CD4-positive, alpha-beta T cell (primary cell): ENCODE measurements at regions of chr6 and their contacts with region 1.

Region 1: DNA sequence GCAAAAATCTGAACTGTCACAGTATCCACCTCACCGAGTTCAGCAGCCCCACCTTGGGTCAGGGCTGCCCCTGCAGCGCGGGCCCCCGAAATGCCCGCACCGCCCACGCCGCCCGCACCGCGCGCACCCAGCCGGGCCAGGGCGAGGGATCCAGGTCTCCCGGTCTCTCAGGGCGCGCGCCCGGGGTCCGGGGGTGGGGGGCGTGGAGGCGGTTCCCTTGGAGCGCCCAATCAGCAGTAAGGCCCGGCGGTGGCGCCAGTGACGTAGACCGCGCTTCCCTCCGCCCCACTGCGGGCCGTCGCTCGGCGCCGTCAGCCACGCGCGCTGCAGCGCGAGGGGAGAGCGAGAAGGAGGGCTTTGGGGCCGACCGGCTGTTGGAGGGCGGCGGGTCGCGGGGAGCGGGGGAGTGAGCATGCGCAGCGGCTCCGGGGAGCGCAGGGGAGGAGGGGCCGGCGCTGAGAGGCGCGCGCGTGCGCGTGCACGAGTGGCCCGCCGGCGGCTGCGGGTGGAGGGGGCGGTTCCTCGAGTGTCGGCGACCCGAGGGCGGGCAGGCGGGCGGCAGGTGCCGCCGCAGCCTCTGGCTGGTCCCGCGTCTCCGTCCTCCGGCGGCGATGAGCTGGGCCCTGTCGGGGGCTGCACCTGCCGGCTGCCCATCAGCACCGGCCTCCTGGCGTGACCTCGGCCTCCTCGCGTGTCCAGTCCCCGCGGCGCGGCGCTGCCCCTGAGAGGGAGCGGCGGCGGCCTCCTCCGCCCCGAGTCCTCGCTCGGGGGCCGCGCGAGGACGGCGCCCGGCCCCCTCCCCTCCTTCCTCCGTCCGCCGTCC is at the start of gene TMEM170B:
- DNase-seq: peak; percentile 94 to 99 (median 97)
- ATAC-seq: peak; percentile 92
- H3K4me3 ChIP-seq: peak within 1 kb of the TSS; percentile 73
- H3K4me3 Mint-ChIP-seq: peak within 1 kb of the TSS; percentile 93
- H3K27ac ChIP-seq: peak within 1 kb of the TSS in 1 of 2 donors; percentile 47
- H3K27ac Mint-ChIP-seq: peak within 1 kb of the TSS; percentile 84
- H3K4me1 ChIP-seq: peaks cover 14% of the 10 kb centered on the region
- H3K4me1 Mint-ChIP-seq: peaks cover 28% of the 10 kb centered on the region
- H3K27me3 ChIP-seq: no peaks in the 10 kb centered on the region
- H3K27me3 Mint-ChIP-seq: peaks cover 6% of the 10 kb centered on the region
- CTCF ChIP-seq: no peak
- total RNA-seq, gene TMEM170B: 1.9 to 2.1 TPM

Region 2: GRCh38 chr6:10837995-10838793 is 699.2 kb before region 1 on chr6 and contains the start of gene MAK:
- CTCF ChIA-PET with region 1: no interaction called
- POLR2A ChIA-PET with region 1: no interaction called
- intact Hi-C with region 1: loop called in 1 of 2 experiments (anchors 5 kb)
- DNase-seq: peak; percentile 68 to 95 (median 82)
- ATAC-seq: peak; percentile 97
- H3K4me3 ChIP-seq: peak within 1 kb of the TSS; percentile 62
- H3K4me3 Mint-ChIP-seq: peak within 1 kb of the TSS; percentile 79
- H3K27ac ChIP-seq: no peak within 1 kb of the TSS
- H3K27ac Mint-ChIP-seq: peak within 1 kb of the TSS; percentile 60
- H3K4me1 ChIP-seq: peaks cover 21% of the 10 kb centered on the region
- H3K4me1 Mint-ChIP-seq: peaks cover 21% of the 10 kb centered on the region
- H3K27me3 ChIP-seq: peaks cover 31 to 48% of the 10 kb centered on the region in 2 experiments
- H3K27me3 Mint-ChIP-seq: peaks cover 66% of the 10 kb centered on the region
- CTCF ChIP-seq: no peak
- total RNA-seq, gene MAK: 0.47 to 0.73 TPM

Region 3: GRCh38 chr6:11093589-11094410 is 443.6 kb before region 1 on chr6 and contains the start of gene SMIM13:
- CTCF ChIA-PET with region 1: no interaction called
- POLR2A ChIA-PET with region 1: interaction called, 3 read pairs
- intact Hi-C with region 1: loop called (anchors 2 kb)
- DNase-seq: peak; percentile 88 to 97 (median 94)
- ATAC-seq: peak; percentile 92
- H3K4me3 ChIP-seq: peak within 1 kb of the TSS; percentile 83
- H3K4me3 Mint-ChIP-seq: peak within 1 kb of the TSS; percentile 97
- H3K27ac ChIP-seq: peak within 1 kb of the TSS; percentile 87 to 92
- H3K27ac Mint-ChIP-seq: peak within 1 kb of the TSS; percentile 97
- H3K4me1 ChIP-seq: peaks cover 20% of the 10 kb centered on the region
- H3K4me1 Mint-ChIP-seq: peaks cover 29% of the 10 kb centered on the region
- H3K27me3 ChIP-seq: no peaks in the 10 kb centered on the region
- H3K27me3 Mint-ChIP-seq: no peaks in the 10 kb centered on the region
- CTCF ChIP-seq: peak; percentile 74
- total RNA-seq, gene SMIM13: 3.0 to 4.6 TPM

Region 4: DNA sequence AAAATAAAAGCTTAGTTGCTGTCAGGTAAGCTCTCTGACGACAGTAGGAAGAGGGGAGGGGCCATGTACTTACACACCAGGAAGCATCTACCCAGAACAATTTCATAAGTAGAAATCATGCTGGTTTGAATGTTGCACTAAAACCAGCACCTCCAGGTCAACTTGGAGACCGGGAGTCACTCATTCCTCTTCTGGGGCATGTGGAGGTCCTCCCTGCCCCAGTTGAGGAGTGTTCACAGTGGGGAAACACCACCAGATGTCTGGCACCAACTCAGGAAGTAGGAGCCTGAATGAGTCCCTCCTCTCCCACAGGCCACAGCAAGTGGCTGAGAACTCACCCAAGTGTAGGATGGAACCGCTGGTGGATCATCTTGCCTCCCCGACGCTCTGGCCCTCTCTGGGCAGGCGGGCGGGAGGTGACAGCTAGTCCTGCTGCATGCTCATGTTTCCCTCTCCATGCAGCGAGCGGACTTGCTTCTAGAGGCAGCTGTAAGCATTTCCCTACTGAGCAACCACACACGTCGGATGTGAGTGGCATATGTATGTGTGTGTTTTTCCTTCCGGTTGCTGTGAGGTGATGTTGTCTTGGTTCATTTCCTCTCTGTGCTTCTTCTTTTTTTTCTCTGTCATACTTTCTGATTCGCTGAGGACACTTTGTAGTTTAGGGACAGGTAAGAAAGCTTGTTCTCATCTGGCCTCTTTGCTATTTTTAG is 155.5 kb before region 1 on chr6:
- CTCF ChIA-PET with region 1: no interaction called
- POLR2A ChIA-PET with region 1: interaction called, 3 read pairs
- intact Hi-C with region 1: loop called in 1 of 2 experiments (anchors 2 kb)
- DNase-seq: peak; percentile 41 to 94 (median 59)
- ATAC-seq: peak; percentile 93
- H3K4me3 ChIP-seq: peak overlapping the region; percentile 71
- H3K4me3 Mint-ChIP-seq: peak overlapping the region; percentile 85
- H3K27ac ChIP-seq: peak overlapping the region; percentile 84 to 86
- H3K27ac Mint-ChIP-seq: peak overlapping the region; percentile 93
- H3K4me1 ChIP-seq: peaks cover 48% of the 10 kb centered on the region
- H3K4me1 Mint-ChIP-seq: peaks cover 69% of the 10 kb centered on the region
- H3K27me3 ChIP-seq: no peaks in the 10 kb centered on the region
- H3K27me3 Mint-ChIP-seq: no peaks in the 10 kb centered on the region
- CTCF ChIP-seq: no peak

Region 5: DNA sequence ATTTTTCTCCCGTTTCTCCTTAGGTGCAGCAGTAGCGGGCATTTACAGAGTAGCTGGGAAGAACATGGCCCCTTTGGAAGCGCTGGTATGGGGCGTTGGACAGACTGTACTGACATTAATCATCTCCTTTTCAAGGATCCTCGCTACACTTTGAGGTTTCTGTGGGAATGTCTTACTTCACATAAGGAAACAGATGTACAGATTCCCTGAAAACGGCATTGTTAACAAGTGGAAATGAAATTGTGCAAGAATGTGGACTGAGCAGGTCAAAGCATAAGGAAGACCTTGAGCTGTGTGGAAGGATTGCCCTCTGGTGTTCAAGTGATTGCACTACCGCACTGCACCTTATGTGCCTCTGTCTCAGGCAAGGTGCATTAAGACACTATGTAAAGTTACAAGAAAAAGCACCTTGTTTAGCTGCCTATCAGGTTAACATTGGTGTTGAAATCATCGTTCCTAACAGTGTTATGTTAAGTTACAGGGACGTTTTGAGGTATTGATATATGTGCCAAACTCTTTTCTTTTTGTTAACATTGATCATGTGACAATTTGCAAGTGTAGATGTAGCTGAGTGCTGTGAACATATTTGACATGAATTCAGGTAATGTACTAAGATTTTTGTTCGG is 38.1 kb after region 1 on chr6:
- CTCF ChIA-PET with region 1: no interaction called
- POLR2A ChIA-PET with region 1: no interaction called
- intact Hi-C with region 1: loop called in 1 of 2 experiments (anchors 5 kb)
- DNase-seq: peak in 13 of 14 experiments; percentile 7 to 76 (median 30)
- ATAC-seq: peak; percentile 95
- H3K4me3 ChIP-seq: no peak overlapping the region
- H3K4me3 Mint-ChIP-seq: no peak overlapping the region
- H3K27ac ChIP-seq: no peak overlapping the region
- H3K27ac Mint-ChIP-seq: no peak overlapping the region
- H3K4me1 ChIP-seq: no peaks in the 10 kb centered on the region
- H3K4me1 Mint-ChIP-seq: no peaks in the 10 kb centered on the region
- H3K27me3 ChIP-seq: no peaks in the 10 kb centered on the region
- H3K27me3 Mint-ChIP-seq: no peaks in the 10 kb centered on the region
- CTCF ChIP-seq: peak; percentile 73